Thyroid gland (tissue), 4 donors: ENCODE measurements at regions of chr19 and their contacts with region 1.

Region 1: GRCh38 chr19:39532233-39533002 is at the start of gene EID2B:
- DNase-seq: peak; percentile 95 to 96
- H3K4me3 ChIP-seq: peak within 1 kb of the TSS; percentile 30 to 95 (median 60)
- H3K27ac ChIP-seq: peak within 1 kb of the TSS; percentile 54 to 74 (median 58)
- H3K4me1 ChIP-seq: peaks cover 0 to 5% of the 10 kb centered on the region in 2 donors
- H3K27me3 ChIP-seq: no peaks in the 10 kb centered on the region
- CTCF ChIP-seq: peak; percentile 98 to 100 (median 100)
- POLR2A ChIP-seq: peak; percentile 21 to 84
- total RNA-seq, gene EID2B: 2.4 to 7.1 (median 4.4) TPM

Region 2: DNA sequence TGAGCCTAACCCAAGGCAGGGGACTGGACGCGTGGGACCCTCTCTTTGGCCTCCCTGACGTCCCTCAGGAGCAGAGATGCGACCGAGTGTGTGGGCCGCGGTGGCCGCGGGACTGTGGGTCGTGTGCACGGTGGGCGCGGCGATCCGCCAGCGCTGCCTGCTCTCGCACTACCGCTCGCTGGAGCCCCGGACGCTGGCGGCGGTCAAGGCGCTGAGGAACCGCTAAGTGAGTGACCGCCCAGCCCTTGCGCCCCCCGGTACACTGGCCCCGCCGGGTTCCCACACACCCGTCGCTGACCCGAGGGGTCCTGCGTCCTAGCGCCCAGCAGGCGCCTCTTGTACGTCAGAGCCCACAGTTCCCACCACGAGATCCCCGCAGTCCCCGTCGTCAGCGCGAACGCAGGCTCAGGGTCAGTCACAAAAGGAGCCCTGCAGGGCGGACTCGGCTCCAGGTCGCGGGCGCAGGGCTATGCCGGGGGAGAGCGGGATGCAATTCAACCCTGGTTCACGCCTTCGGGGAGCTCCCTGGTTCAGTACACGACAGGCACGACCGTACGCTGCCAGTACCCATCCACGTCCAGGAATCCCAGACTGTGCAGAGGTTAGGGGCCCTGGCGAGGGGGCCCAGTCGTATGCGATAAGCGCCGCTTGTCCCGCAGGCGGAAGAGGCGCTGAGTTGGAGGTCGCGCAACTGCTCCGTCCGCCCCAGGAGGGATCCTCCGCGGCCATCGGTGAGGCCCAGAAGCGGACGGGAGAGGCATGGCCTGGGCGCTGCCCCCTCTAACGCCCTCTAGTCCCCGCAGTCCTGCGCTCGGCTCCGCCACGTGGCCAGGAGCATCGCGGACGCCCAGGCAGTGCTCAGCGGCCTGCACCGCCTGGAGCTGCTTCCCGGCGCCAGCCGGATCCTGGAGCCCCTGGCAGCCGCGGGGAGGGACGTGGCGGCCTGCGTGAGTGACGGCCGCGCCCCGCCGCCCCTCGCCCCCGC is 267.8 kb before region 1 on chr19:
- intact Hi-C with region 1: no loop called
- DNase-seq: no peak
- H3K4me3 ChIP-seq: no peak overlapping the region
- H3K27ac ChIP-seq: no peak overlapping the region
- H3K4me1 ChIP-seq: peaks cover 0 to 17% of the 10 kb centered on the region in 2 donors
- H3K27me3 ChIP-seq: peaks cover 17% of the 10 kb centered on the region
- CTCF ChIP-seq: no peak
- POLR2A ChIP-seq: no peak

Region 3: DNA sequence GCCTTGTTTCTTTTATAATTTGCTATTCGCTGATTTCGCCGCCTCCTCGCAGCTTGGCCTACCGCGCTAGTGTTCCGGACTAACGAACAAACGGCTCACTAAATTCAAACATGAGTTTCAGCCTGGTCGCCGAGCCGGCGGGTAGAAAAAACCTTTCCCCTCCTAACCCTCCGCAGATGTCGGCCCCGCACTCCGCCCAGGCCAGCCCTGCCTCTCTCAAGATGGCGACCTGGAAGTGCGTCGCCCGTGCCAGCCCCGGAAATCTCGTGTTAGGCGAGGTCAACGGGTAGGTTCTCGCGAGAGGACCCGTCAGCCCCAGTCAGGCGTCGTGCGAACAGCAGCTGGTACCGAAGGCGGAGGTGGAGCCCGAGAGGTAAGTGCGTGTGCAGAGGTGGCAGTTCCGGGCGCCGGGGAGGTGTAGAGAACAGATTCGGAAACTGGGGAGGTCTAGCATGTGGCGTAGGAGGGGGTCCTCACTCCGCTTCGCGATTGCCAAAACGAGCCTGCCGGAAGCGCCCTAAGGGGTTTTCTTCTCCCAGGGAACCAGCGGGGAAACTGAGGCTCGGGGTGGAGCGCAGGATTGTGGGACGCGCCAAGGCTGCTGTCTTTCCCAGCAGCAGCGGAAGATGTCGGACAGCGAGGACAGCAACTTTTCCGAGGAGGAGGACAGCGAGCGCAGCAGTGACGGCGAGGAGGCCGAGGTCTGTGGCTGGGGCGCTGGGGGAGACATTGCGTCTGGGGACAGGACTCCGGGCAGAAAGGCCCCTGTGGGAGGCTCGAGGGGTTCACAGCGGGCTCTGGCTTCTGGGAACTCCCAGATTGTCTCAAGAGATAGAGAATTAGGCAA is 86.9 kb before region 1 on chr19 and contains the start of gene SUPT5H:
- intact Hi-C with region 1: loop called (anchors 10 kb)
- DNase-seq: peak; percentile 98
- H3K4me3 ChIP-seq: peak within 1 kb of the TSS; percentile 71 to 86 (median 85)
- H3K27ac ChIP-seq: peak within 1 kb of the TSS; percentile 84 to 90 (median 88)
- H3K4me1 ChIP-seq: peaks cover 21 to 25% of the 10 kb centered on the region in 2 donors
- H3K27me3 ChIP-seq: no peaks in the 10 kb centered on the region
- CTCF ChIP-seq: peak in 1 of 6 experiments; percentile 19
- POLR2A ChIP-seq: peak; percentile 55 to 95
- total RNA-seq, gene SUPT5H: 93.6 to 203 (median 116) TPM

Region 4: DNA sequence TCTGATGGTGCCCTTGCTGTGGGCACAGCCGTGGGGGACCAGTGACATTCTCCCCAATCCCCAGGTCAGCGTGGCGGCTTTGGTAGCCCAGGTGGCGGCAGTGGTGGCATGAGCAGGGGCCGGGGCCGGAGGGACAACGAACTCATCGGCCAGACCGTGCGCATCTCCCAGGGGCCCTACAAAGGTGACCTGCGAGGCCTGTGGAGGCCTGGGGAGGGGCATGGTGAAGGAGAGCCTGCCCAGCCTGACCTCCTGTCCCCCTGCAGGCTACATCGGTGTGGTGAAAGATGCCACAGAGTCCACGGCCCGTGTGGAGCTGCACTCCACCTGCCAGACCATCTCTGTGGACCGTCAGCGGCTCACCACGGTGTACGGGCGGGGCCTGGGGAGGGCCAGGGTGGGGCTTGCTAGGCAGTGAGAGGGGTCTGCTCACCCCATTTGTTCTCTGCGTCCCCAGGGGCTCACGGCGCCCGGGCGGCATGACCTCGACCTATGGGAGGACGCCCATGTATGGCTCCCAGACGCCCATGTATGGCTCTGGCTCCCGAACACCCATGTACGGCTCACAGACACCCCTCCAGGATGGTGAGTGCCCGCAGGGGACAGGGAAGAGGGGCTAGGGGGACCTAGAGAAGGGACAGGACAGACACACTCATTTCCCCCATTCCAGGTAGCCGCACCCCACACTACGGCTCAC is 59.5 kb before region 1 on chr19:
- intact Hi-C with region 1: loop called (anchors 2 kb)
- DNase-seq: no peak
- H3K4me3 ChIP-seq: no peak overlapping the region
- H3K27ac ChIP-seq: no peak overlapping the region
- H3K4me1 ChIP-seq: no peaks in the 10 kb centered on the region
- H3K27me3 ChIP-seq: no peaks in the 10 kb centered on the region
- CTCF ChIP-seq: no peak
- POLR2A ChIP-seq: no peak

Region 5: DNA sequence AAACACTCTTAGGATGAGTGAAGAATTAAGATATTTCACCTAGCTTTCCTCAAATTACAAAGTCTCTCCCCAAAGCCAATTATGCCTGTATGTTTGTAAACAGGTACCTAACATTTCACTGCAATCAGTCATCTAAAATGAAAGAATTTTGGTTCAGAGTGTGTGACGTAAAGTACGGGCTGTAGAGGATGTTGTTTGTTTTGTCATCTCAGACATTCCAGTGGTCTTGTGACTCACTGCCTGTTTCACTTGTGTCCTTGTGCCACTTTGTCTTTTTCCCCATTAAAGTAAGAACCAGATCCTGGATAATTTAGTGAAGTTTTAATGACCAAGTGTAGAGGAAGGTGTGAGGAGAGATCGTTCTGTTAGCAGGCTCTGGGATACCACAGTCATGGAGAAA is 36.2 kb after region 1 on chr19:
- intact Hi-C with region 1: no loop called
- DNase-seq: no peak
- H3K4me3 ChIP-seq: no peak overlapping the region
- H3K27ac ChIP-seq: no peak overlapping the region
- H3K4me1 ChIP-seq: peaks cover 14 to 20% of the 10 kb centered on the region in 2 donors
- H3K27me3 ChIP-seq: no peaks in the 10 kb centered on the region
- CTCF ChIP-seq: no peak
- POLR2A ChIP-seq: no peak

Region 6: DNA sequence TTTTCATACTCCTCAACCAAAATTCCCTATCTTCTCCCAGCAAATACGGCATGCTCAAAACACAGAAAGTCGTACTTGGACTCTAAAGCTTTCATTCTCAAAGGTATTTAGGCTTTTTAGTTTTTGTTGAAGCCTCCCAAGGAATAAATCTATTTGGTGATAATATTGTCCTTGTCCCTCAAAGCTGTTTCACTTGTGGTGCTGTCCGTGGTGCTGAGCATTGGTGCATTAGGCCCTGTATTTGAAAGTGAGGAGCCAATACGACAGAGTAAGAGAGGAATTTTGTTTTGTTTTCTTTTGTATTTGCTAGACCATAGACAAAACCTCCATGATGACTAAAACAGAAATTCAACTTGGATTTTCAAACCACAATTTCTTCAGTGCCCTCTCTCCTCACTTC is 66.7 kb after region 1 on chr19:
- intact Hi-C with region 1: no loop called
- DNase-seq: peak; percentile 6 to 61
- H3K4me3 ChIP-seq: no peak overlapping the region
- H3K27ac ChIP-seq: no peak overlapping the region
- H3K4me1 ChIP-seq: no peaks in the 10 kb centered on the region
- H3K27me3 ChIP-seq: no peaks in the 10 kb centered on the region
- CTCF ChIP-seq: no peak
- POLR2A ChIP-seq: no peak